Right cardiac atrium (tissue), 5 donors: ENCODE measurements at regions of chr5 and their contacts with region 1.

Region 1: DNA sequence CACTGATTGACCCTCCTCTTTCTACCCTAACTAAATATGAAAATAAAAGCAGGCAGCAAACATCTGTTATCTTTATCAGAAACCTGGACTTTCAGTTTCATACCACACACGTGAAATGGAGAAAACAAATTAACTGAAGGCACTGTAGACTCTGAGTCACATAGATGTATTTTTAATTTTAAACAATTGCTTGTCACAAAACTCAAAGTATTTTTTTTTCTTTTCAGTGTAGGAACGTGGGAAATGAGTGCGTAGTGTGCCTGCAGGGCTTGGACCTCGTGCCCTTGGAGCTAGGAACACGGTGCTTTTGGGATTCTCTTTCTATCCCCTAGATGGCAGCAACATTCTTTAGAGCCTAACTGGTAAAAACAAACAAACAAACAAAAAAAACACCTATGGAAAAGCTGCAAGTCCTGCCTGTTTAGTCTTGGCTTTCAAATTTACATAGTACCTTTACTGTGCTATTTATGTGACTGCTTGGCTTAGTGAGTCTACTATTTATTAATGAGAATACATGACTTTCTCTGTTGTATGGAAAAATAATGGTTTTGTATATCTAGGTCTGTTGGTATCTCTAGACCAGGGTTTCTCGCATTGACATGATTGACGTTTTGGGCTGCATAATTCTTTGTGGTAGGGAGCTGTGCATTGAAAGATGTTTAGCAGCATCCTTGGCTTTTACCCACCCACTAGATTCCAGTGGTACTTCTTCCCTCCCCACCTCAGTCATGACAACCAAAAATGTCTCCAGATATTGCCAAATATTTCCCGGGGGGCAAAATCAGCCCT is 16.8 kb upstream of the ACTBL2 start:
- DNase-seq: peak in 2 of 3 donors; percentile 33 to 51
- ATAC-seq: peak; percentile 37 to 52
- H3K4me3 ChIP-seq: peak overlapping the region; percentile 42
- H3K27ac ChIP-seq: no peak overlapping the region
- H3K4me1 ChIP-seq: peaks cover 4% of the 10 kb centered on the region
- H3K27me3 ChIP-seq: no peaks in the 10 kb centered on the region

Region 2: DNA sequence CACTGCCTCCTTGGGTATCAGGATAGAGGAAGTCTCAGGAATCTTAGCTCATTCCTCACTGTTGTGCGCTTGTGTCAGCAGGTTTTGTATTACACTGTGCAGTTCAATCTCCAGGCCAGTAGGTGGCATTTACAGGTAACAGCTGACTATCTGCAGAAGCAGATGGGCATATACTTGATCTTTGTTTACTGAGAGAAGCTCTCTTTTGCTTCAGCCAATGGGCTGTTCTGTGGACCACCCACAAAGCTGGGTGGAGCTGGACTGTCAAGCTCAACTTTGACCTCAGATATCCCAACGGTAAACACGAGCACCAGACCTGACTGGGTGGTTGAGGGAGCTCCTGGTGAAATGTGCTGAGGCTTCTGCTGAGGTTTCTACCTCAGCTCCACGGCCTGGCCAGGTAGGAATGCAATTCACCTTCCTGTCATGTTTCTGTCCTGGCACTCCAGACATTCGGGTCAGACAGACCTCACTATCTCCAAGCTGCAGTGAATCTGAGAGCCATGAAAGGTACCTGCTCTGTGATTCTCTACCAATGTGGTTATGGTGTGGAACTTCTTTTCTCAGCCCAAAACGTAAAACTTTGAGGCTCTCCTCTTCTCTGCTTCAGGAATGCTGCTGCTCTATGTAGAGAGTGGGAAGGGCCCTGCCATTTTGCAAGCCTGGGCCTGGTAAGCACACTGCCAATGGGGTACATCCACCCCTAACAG is 151.1 kb after region 1 on chr5:
- intact Hi-C with region 1: loop called in 2 of 4 experiments (anchors 5 to 10 kb)
- DNase-seq: peak in 1 of 3 donors; percentile 12
- ATAC-seq: peak; percentile 48 to 57
- H3K4me3 ChIP-seq: no peak overlapping the region
- H3K27ac ChIP-seq: no peak overlapping the region
- H3K4me1 ChIP-seq: no peaks in the 10 kb centered on the region
- H3K27me3 ChIP-seq: no peaks in the 10 kb centered on the region

Region 3: GRCh38 chr5:57692582-57693487 is 193.4 kb after region 1 on chr5:
- intact Hi-C with region 1: loop called in 1 of 4 experiments (anchors 5 kb)
- DNase-seq: peak; percentile 79 to 82 (median 81)
- ATAC-seq: peak; percentile 88 to 95
- H3K4me3 ChIP-seq: no peak overlapping the region
- H3K27ac ChIP-seq: peak overlapping the region; percentile 73
- H3K4me1 ChIP-seq: peaks cover 5% of the 10 kb centered on the region
- H3K27me3 ChIP-seq: no peaks in the 10 kb centered on the region

Region 4: GRCh38 chr5:58460732-58461286 is 961.4 kb after region 1 on chr5:
- intact Hi-C with region 1: loop called (anchors 2 to 5 kb)
- DNase-seq: peak; percentile 92 to 96 (median 95)
- ATAC-seq: peak; percentile 89 to 90
- H3K4me3 ChIP-seq: peak overlapping the region; percentile 91
- H3K27ac ChIP-seq: peak overlapping the region; percentile 89
- H3K4me1 ChIP-seq: no peaks in the 10 kb centered on the region
- H3K27me3 ChIP-seq: no peaks in the 10 kb centered on the region